ENCODE measurements at regions of chr15 and their contacts with region 1.

Region 1: GRCh38 chr15:66401130-66402021 is 14.7 kb downstream of the MAP2K1 start:
- DNase-seq: no peak
- CTCF ChIP-seq: peak; percentile 33

Region 2: DNA sequence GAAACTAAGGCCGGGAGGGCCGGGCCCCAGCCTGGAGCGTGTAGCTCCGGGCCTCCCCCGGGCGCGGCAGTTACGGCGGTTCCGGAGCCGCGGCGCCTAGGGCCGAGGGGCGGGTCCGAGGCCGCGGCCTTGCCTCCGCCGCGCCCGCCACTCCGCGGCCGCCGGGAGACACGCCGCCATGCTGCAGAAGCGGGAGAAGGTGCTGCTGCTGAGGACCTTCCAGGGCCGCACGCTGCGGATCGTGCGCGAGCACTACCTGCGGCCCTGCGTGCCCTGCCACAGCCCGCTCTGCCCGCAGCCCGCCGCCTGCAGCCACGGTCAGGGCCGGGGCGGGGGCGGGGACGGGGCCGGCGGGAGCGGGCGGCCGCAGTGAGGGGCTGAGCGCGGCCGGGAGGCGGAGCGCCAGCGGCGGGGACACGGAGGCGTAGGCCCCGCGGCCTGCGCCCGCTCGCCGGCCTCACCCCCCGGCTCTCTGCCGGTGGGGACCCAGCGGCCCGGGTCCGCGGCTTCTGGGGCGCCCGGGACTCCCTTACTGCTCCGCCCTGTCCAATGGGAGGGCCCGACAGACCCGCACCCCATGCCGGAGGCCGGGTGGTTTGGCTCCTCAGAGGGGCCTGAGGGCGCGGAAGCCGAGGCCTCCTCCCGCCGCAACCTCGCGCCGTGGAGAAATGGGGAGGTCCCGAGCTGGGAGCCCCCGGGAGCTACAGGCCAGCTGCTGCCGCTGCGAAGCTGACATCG is 107.8 kb before region 1 on chr15 and contains the start of gene DIS3L:
- CTCF ChIA-PET with region 1: no interaction called
- POLR2A ChIA-PET with region 1: interaction called, 10 read pairs
- DNase-seq: peak; percentile 85
- CTCF ChIP-seq: no peak

Region 3: GRCh38 chr15:66359740-66360139 is 41.6 kb before region 1 on chr15:
- CTCF ChIA-PET with region 1: no interaction called
- POLR2A ChIA-PET with region 1: no interaction called
- DNase-seq: peak; percentile 34
- CTCF ChIP-seq: no peak

Region 4: GRCh38 chr15:67290319-67290718 is 888.9 kb after region 1 on chr15:
- CTCF ChIA-PET with region 1: no interaction called
- POLR2A ChIA-PET with region 1: no interaction called
- DNase-seq: no peak
- CTCF ChIP-seq: no peak

Measured in GM10248 (cell line).